ENCODE measurements at regions of chr13 and their contacts with region 1.

Region 1: GRCh38 chr13:51206584-51206983 is 15.6 kb upstream of the FAM124A start:
- DNase-seq: no peak

Region 2: GRCh38 chr13:51192348-51192747 is 14.2 kb before region 1 on chr13:
- CTCF ChIA-PET with region 1: no interaction called
- POLR2A ChIA-PET with region 1: no interaction called
- DNase-seq: no peak

Region 3: GRCh38 chr13:51222686-51223559 is 16.3 kb after region 1 on chr13:
- CTCF ChIA-PET with region 1: interaction called, 12 read pairs
- POLR2A ChIA-PET with region 1: no interaction called
- DNase-seq: peak; percentile 26